Heart left ventricle (tissue), 16 donors: ENCODE measurements at regions of chr5 and their contacts with region 1.

Region 1: GRCh38 chr5:93607367-93608258 is 24.6 kb downstream of the NR2F1 start:
- DNase-seq: no peak
- ATAC-seq: peak in 3 of 4 donors; percentile 68 to 69 (median 68)
- H3K4me3 ChIP-seq: no peak overlapping the region
- H3K27ac ChIP-seq: no peak overlapping the region
- H3K4me1 ChIP-seq: peaks cover 0 to 23% (median 6%) of the 10 kb centered on the region in 12 donors
- H3K27me3 ChIP-seq: peaks cover 46 to 100% (median 96%) of the 10 kb centered on the region in 9 donors
- CTCF ChIP-seq: peak in 11 of 12 donors; percentile 12 to 62 (median 45)
- POLR2A ChIP-seq: no peak

Region 2: DNA sequence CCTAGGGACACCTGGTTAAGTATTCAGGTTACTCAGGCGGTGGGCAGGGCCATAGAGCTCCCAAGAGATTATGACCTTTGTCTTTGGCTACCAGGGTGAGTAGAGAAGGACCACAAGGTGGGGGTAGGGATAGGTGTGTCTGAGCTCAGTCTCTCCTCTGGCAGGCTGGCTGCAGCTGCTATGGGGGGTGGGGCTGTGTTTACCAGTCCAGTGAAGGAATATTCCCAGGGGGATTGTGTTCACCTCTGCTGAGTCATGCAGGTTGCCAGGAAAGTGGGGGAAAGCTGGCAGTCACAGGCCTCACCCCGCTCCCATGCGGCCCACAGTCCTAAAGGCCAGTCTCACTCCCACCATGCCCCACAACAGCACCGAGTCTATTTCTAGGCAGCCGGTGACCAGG is 187.3 kb after region 1 on chr5:
- intact Hi-C with region 1: loop called in 7 of 10 experiments (anchors 2 to 10 kb)
- DNase-seq: no peak
- ATAC-seq: no peak
- H3K4me3 ChIP-seq: no peak overlapping the region
- H3K27ac ChIP-seq: no peak overlapping the region
- H3K4me1 ChIP-seq: no peaks in the 10 kb centered on the region
- H3K27me3 ChIP-seq: no peaks in the 10 kb centered on the region
- CTCF ChIP-seq: no peak
- POLR2A ChIP-seq: no peak

Region 3: DNA sequence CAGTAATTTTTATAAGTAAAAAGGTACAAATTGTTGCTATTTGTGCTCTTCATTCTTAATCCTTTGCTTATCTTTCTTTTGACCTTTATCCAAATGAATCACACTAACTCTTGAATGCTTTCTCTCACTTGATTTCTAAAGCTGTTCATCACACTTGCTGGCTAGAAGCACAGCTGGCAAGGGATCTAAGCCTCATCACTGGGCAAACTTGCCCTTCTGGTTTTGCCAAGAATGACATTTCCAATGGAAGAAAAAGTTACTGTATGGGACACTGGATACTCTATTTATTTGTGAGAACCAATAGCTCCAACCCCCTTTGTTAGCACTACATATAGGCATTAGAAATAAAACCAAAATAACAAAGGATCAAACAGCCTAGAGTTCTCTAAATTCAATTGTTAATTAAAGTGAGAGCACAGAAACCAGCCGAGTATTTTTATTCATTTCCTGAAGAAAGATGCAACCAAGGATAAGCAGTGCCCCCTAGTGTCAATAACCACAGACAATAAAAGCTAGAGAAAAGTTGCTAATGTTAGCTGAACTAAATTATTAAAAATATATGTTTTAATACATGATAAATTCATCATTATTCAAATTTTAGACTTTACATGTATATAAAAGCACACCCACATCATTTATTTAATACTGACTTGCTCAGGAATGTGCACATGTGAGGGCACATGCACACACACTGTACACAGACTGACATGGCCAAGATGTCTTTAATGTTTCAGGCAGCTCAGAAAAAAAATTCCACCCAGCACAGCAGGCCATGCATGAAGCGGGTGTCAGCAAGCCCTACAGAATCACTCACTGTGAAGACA is 193.6 kb after region 1 on chr5:
- intact Hi-C with region 1: loop called in 7 of 10 experiments (anchors 2 to 10 kb)
- DNase-seq: no peak
- ATAC-seq: no peak
- H3K4me3 ChIP-seq: no peak overlapping the region
- H3K27ac ChIP-seq: no peak overlapping the region
- H3K4me1 ChIP-seq: peaks cover 0 to 5% (median 0%) of the 10 kb centered on the region in 12 donors
- H3K27me3 ChIP-seq: no peaks in the 10 kb centered on the region
- CTCF ChIP-seq: peak; percentile 56 to 81 (median 67)
- POLR2A ChIP-seq: no peak

Region 4: GRCh38 chr5:93883459-93883858 is 275.8 kb after region 1 on chr5:
- intact Hi-C with region 1: no loop called
- DNase-seq: no peak
- ATAC-seq: no peak
- H3K4me3 ChIP-seq: no peak overlapping the region
- H3K27ac ChIP-seq: no peak overlapping the region
- H3K4me1 ChIP-seq: peaks cover 0 to 12% (median 0%) of the 10 kb centered on the region in 12 donors
- H3K27me3 ChIP-seq: no peaks in the 10 kb centered on the region
- CTCF ChIP-seq: no peak
- POLR2A ChIP-seq: no peak

Region 5: DNA sequence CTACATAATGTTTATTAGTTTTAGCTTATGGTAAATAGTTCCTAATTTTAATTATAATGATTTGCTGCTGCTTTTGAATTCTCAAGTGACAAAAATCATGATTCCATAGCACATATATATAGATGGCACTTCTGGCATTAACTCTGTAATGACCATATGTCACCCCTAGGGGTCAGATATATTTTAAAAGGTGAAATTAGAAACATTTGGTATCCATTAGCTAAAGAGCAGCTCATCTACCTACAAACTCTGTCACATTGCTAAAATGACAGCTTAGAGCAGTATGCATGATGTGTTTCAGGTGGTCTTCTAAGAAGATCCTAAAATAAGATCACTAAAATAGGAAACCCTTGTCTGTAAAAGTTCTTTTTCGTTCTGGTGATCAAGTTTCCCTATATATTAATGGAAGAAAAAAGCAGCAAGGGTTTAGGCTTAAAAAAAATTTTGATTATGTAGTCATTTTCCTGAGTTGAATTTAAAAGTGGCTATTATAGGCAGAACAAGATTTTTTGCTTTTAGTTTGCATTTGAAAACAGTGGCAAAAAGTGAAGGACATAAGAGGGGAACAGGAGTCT is 291.5 kb after region 1 on chr5:
- intact Hi-C with region 1: loop called in 1 of 10 experiments (anchors 10 kb)
- DNase-seq: no peak
- ATAC-seq: no peak
- H3K4me3 ChIP-seq: no peak overlapping the region
- H3K27ac ChIP-seq: no peak overlapping the region
- H3K4me1 ChIP-seq: no peaks in the 10 kb centered on the region
- H3K27me3 ChIP-seq: no peaks in the 10 kb centered on the region
- CTCF ChIP-seq: peak in 9 of 12 donors; percentile 10 to 51 (median 36)
- POLR2A ChIP-seq: no peak

Region 6: GRCh38 chr5:93915142-93915553 is 307.5 kb after region 1 on chr5:
- intact Hi-C with region 1: loop called in 3 of 10 experiments (anchors 10 kb)
- DNase-seq: no peak
- ATAC-seq: no peak
- H3K4me3 ChIP-seq: no peak overlapping the region
- H3K27ac ChIP-seq: no peak overlapping the region
- H3K4me1 ChIP-seq: no peaks in the 10 kb centered on the region
- H3K27me3 ChIP-seq: no peaks in the 10 kb centered on the region
- CTCF ChIP-seq: peak; percentile 21 to 62 (median 50)
- POLR2A ChIP-seq: no peak